Activated T-helper 2 cell treated with anti-CD3 and anti-CD28 coated beads, Interferon-gamma antibody, Interleukin-2, Interleukin-4, amounts not matched to agents 10 μg/mL and 5 μg/mL and 100 μg/mL, durations not matched to agents 14 hours and 24 hours and 36 hours (primary cell): ENCODE measurements at regions of chr20 and their contacts with region 1.

Region 1: DNA sequence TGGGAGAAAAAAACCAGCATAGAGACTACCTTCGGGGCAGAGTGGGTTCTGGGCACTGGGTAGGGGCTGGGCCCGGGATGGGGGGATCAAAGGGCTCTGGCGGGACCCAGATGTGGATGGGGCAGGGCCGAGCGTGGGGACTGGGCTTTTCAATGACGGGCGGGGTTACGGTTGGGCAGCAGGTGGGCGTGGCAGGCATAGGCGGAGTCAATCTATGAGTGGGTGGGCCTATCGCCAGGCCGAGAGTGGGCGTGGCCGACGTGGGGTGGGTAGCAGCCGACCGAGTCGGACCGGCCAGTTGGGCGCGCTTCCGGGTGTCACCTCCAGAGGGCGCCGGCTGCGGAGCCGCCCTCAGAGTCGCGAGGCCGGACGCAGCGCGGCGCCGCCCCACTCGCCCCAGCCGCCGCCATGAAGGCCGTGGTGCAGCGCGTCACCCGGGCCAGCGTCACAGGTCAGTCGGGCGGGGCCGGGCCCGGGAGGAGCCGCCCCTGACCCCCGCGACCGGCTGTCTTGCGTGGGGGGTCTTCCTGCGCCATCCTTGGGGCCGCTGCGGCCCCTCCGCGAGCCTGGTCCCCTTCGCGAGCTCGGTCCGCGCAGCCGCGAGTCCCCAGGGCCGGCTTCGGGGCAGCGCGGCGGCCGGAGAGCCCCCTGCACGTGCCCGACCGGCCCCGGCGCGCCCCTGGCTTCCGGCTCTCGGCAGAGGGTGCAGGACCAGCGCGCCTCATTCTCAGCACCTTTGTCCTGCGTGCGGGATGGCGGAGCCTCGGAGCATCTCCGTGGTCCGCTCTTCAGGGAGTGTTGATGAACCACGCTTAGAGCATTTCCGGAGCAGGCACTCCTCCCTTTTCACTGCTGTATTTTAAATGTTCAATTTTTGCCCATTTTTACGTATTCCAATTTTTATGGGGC is at the start of gene DTD1:
- DNase-seq: peak; percentile 83
- H3K4me3 Mint-ChIP-seq: peak within 1 kb of the TSS; percentile 87
- H3K27ac Mint-ChIP-seq: peak within 1 kb of the TSS; percentile 74
- H3K4me1 Mint-ChIP-seq: peaks cover 20% of the 10 kb centered on the region
- H3K27me3 Mint-ChIP-seq: peaks cover 9% of the 10 kb centered on the region
- total RNA-seq, gene DTD1: 49.9 and 50.3 TPM in 2 replicates

Region 2: GRCh38 chr20:18176318-18176785 is 411.6 kb before region 1 on chr20:
- intact Hi-C with region 1: no loop called
- DNase-seq: no peak
- H3K4me3 Mint-ChIP-seq: no peak overlapping the region
- H3K27ac Mint-ChIP-seq: no peak overlapping the region
- H3K4me1 Mint-ChIP-seq: no peaks in the 10 kb centered on the region
- H3K27me3 Mint-ChIP-seq: no peaks in the 10 kb centered on the region

Region 3: DNA sequence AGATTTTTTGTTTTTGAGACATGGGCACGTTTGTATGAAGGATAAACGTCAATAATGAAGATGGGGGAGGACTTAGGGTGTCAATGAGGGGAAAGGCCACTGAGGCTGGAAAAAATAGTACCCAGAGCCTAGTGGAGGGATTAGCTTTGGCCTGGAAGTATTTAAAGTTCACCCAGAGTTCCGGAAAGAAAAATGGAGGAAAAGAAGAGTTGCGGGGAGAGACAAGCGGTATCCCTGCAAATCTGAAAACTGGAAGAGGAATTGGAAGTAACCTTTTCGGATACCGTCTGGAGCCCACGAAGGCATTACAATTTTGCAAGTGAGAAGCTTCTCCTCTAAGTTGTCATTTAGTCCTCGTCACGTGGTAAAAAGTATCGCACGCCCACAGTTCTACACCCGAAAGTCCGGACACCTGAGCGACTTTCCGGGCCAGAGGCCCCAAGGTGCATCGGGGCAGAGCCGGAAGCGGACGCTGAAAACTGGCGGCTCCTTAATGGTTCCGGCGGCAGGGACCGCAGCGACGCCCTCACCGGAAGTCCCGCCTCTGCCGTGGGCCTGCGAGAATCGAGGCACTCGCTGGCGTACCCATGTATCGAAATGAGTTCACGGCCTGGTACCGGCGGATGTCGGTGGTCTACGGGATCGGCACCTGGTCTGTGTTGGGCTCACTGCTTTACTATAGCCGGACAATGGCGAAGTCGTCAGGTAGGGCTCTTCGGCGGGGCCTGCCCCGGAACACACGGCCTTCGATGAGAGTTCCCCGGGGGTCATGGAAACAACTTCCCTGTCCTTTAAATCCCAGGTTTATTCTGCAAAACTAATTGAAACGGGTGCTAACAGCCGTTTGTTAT is 20.8 kb before region 1 on chr20 and contains the start of gene SMIM26:
- intact Hi-C with region 1: loop called (anchors 1 kb)
- DNase-seq: peak; percentile 91
- H3K4me3 Mint-ChIP-seq: peak within 1 kb of the TSS; percentile 97
- H3K27ac Mint-ChIP-seq: peak within 1 kb of the TSS; percentile 96
- H3K4me1 Mint-ChIP-seq: peaks cover 10% of the 10 kb centered on the region
- H3K27me3 Mint-ChIP-seq: no peaks in the 10 kb centered on the region
- total RNA-seq, gene SMIM26: 55.0 and 60.2 TPM in 2 replicates